ENCODE measurements at regions of chr15 and their contacts with region 1.

Region 1: GRCh38 chr15:65595960-65596359 is 15.0 kb downstream of the INTS14 start:
- DNase-seq: peak; percentile 53 to 62
- ATAC-seq: peak; percentile 73 to 85; a peak in 5 of 6 replicates
- H3K4me3 ChIP-seq: no peak overlapping the region
- H3K27ac ChIP-seq: no peak overlapping the region
- H3K4me1 ChIP-seq: peaks cover 13% of the 10 kb centered on the region
- CTCF ChIP-seq: peak; percentile 63
- EP300 ChIP-seq: no peak
- POLR2A ChIP-seq: no peak
- RAD21 ChIP-seq: peak; percentile 70 to 77

Region 2: DNA sequence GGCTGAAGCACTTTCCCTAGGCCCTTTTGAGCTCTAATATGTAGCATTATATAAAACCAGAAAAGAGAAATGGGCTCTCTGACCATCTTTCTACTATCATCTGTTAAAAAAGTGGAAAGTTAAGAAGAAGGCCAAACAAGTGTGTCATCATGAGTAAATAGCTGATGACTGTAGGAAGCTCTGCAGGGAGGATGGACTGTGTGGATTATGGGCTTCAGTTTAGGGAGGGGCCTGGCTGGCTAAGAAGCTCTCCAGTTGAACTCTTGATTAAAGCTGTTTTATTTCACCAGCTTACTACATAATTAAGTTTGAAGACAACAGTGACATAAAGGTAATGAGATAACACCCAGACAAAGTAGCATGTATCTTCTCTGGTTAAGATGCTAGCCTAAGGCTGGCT is 15.7 kb before region 1 on chr15:
- CTCF ChIA-PET with region 1: interaction called, 17 read pairs
- POLR2A ChIA-PET with region 1: no interaction called
- DNase-seq: peak; percentile 46 to 50
- ATAC-seq: peak; percentile 81 to 82
- H3K4me3 ChIP-seq: no peak overlapping the region
- H3K27ac ChIP-seq: peak overlapping the region in 1 of 2 experiments; percentile 19; a peak in 1 of 6 replicates
- H3K4me1 ChIP-seq: peaks cover 23% of the 10 kb centered on the region
- CTCF ChIP-seq: no peak
- EP300 ChIP-seq: no peak
- POLR2A ChIP-seq: no peak
- RAD21 ChIP-seq: no peak

Region 3: DNA sequence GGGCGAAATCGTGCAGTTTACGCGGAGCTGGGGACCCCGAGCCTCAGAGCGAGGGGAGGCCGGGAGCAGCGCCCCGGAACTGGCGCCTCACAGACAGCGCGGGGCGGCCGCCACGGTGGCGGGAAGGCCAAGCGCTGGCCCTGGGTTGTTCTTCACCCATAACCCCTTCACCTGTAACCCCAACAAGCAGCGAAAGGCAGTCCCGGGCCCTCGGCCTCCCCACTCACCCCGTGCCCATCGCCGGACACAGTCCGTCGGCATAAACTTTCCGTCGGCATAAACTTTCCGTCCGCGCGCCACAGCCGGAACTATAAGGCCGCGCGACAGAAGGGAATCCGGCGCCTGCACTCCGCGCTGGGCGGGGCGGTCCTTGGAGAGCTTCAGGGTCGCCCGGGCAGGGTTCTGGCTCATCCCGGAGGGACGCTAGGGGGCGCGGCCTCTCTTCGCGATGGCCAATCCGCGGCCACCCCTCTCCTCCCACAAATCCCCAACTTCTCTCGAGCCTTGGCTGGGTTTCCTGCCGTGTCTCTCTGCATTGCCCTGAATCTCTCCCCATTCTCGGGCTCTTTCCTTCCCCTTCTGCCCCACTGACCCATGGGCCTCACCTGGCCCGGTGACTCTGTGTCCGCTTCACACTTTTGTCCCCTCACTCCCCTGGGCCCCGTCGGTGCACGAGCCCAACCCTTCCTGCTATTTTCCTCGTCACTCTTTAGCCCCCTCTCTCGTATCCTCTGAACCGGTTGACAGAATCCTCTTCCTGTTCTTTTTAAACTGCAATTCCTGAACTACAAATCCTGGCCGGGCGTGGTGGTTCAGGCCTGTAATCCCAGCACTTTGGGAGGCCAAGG is 15.1 kb after region 1 on chr15 and contains the start of gene INTS14:
- CTCF ChIA-PET with region 1: interaction called, 43 read pairs
- POLR2A ChIA-PET with region 1: interaction called, 11 read pairs
- DNase-seq: peak; percentile 97 to 99
- ATAC-seq: peak; percentile 97 to 99
- H3K4me3 ChIP-seq: peak within 1 kb of the TSS; percentile 83
- H3K27ac ChIP-seq: peak within 1 kb of the TSS; percentile 93 to 94
- H3K4me1 ChIP-seq: peaks cover 18% of the 10 kb centered on the region
- CTCF ChIP-seq: peak; percentile 81
- EP300 ChIP-seq: no peak
- POLR2A ChIP-seq: peak; percentile 86
- RAD21 ChIP-seq: peak; percentile 59 to 82
- polyA plus RNA-seq, gene INTS14: 81.4 and 82.1 TPM in 2 replicates

Region 4: GRCh38 chr15:65690778-65691177 is 94.8 kb after region 1 on chr15:
- CTCF ChIA-PET with region 1: no interaction called
- POLR2A ChIA-PET with region 1: no interaction called
- DNase-seq: no peak
- ATAC-seq: no peak
- H3K4me3 ChIP-seq: no peak overlapping the region
- H3K27ac ChIP-seq: no peak overlapping the region
- H3K4me1 ChIP-seq: no peaks in the 10 kb centered on the region
- CTCF ChIP-seq: no peak
- EP300 ChIP-seq: no peak
- POLR2A ChIP-seq: no peak
- RAD21 ChIP-seq: no peak

Region 5: GRCh38 chr15:65856821-65857455 is 261.0 kb after region 1 on chr15:
- CTCF ChIA-PET with region 1: interaction called, 14 read pairs
- POLR2A ChIA-PET with region 1: no interaction called
- DNase-seq: peak; percentile 57 to 77
- ATAC-seq: peak; percentile 89 to 90
- H3K4me3 ChIP-seq: no peak overlapping the region
- H3K27ac ChIP-seq: no peak overlapping the region
- H3K4me1 ChIP-seq: no peaks in the 10 kb centered on the region
- CTCF ChIP-seq: peak; percentile 92
- EP300 ChIP-seq: no peak
- POLR2A ChIP-seq: no peak
- RAD21 ChIP-seq: peak; percentile 55 to 56; a peak in 4 of 5 replicates